Activated naive CD4-positive, alpha-beta T cell treated with anti-CD3 and anti-CD28 coated beads for 36 hours (primary cell): ENCODE measurements at regions of chr11 and their contacts with region 1.

Region 1: DNA sequence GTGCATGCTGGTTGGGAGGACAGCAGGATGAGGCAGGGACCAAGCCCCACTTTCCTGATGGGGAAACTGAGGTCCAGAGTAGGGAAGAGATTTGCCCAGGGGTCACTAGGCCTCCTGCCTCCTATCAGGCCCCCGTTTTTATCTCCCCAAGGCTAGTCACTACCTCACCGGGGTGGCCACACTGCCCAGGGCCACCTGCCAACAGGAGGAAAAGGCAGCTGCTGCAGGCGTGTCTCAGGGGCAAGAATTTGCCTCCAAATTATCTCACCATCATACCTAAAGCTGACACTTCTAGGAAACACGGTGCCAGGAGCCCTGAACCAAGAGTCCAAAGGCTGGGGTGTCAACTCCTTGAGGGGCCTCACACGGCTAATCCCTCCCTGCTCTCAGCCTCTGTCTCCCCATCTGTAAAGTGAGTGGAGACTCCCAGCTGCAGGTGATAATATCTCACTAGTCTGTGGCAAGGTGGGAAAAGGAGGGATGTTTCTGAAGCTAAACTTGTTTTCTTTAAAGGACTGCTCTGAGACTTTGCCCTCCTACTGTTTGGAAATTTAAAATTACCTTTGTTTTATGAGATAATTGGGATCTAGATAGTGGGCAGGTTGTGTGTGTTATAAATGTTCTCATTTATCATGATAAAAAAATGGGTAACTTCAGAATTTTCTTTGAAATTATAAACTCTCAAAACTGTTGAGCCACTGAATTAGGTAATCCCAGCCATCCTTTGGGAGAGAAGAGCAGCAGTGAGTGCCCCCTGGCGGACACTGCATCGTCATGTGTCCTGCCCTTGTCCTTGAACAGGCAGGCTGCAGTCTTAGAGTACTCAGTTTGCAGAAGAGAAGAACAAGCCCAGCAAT is 60.0 kb downstream of the MYO7A start:
- DNase-seq: peak; percentile 85
- H3K4me3 Mint-ChIP-seq: no peak overlapping the region
- H3K27ac Mint-ChIP-seq: no peak overlapping the region
- H3K4me1 Mint-ChIP-seq: no peaks in the 10 kb centered on the region
- H3K27me3 Mint-ChIP-seq: no peaks in the 10 kb centered on the region

Region 2: GRCh38 chr11:77127232-77127911 is 60.6 kb before region 1 on chr11:
- CTCF ChIA-PET with region 1: interaction called, 87 read pairs
- intact Hi-C with region 1: loop called (anchors 1 kb)
- DNase-seq: peak; percentile 64
- H3K4me3 Mint-ChIP-seq: peak overlapping the region; percentile 59
- H3K27ac Mint-ChIP-seq: no peak overlapping the region
- H3K4me1 Mint-ChIP-seq: peaks cover 6% of the 10 kb centered on the region
- H3K27me3 Mint-ChIP-seq: no peaks in the 10 kb centered on the region

Region 3: DNA sequence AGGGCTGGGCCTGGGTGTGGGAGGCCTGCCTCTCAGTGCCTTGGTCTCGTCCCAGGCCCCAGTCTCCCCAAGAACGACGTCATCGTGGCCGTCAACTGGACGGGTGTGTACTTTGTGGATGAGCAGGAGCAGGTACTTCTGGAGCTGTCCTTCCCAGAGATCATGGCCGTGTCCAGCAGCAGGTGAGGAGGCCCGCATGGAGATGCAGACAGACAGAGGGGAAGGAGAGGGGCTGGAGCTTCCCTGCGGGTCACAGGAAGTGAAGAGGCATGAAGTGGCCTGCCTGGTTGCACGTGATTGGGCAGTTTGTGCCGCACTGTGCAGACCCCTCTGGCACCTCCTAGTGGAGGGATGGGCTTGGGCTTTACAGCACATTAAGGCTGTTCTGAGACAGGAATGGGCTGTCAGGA is 10.4 kb after region 1 on chr11:
- CTCF ChIA-PET with region 1: interaction called, 11 read pairs
- intact Hi-C with region 1: no loop called
- DNase-seq: peak; percentile 38
- H3K4me3 Mint-ChIP-seq: no peak overlapping the region
- H3K27ac Mint-ChIP-seq: no peak overlapping the region
- H3K4me1 Mint-ChIP-seq: no peaks in the 10 kb centered on the region
- H3K27me3 Mint-ChIP-seq: no peaks in the 10 kb centered on the region

Region 4: GRCh38 chr11:77287615-77288273 is 99.7 kb after region 1 on chr11:
- CTCF ChIA-PET with region 1: no interaction called
- intact Hi-C with region 1: no loop called
- DNase-seq: no peak
- H3K4me3 Mint-ChIP-seq: no peak overlapping the region
- H3K27ac Mint-ChIP-seq: no peak overlapping the region
- H3K4me1 Mint-ChIP-seq: no peaks in the 10 kb centered on the region
- H3K27me3 Mint-ChIP-seq: peaks cover 21% of the 10 kb centered on the region

Region 5: DNA sequence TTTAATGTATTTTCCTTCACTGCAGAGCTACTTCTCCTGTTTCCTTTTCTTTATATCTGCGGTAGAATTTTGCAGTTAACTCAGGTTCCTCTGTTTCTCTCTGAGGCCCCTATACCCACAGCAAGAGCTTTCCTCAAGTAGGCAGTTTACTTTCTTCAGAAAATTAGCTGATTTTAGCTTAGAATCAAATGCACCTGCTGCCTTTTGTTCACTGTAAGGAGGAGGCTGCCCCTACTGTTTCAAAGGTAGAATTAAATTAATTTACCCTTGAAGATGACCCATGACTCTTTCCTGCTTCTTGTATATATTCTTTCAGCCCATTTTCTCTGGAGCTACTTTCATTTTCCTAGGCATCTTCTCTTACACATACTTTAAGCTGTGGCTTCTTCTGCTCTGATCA is 182.2 kb after region 1 on chr11:
- CTCF ChIA-PET with region 1: no interaction called
- intact Hi-C with region 1: loop called (anchors 10 kb)
- DNase-seq: no peak
- H3K4me3 Mint-ChIP-seq: no peak overlapping the region
- H3K27ac Mint-ChIP-seq: no peak overlapping the region
- H3K4me1 Mint-ChIP-seq: peaks cover 10% of the 10 kb centered on the region
- H3K27me3 Mint-ChIP-seq: no peaks in the 10 kb centered on the region

Region 6: GRCh38 chr11:77547863-77548551 is 360.0 kb after region 1 on chr11:
- CTCF ChIA-PET with region 1: interaction called, 5 read pairs
- intact Hi-C with region 1: loop called (anchors 1 kb)
- DNase-seq: peak; percentile 55
- H3K4me3 Mint-ChIP-seq: no peak overlapping the region
- H3K27ac Mint-ChIP-seq: no peak overlapping the region
- H3K4me1 Mint-ChIP-seq: peaks cover 2% of the 10 kb centered on the region
- H3K27me3 Mint-ChIP-seq: no peaks in the 10 kb centered on the region

Region 7: GRCh38 chr11:77619576-77620198 is 431.7 kb after region 1 on chr11:
- CTCF ChIA-PET with region 1: no interaction called
- intact Hi-C with region 1: loop called (anchors 1 kb)
- DNase-seq: no peak
- H3K4me3 Mint-ChIP-seq: no peak overlapping the region
- H3K27ac Mint-ChIP-seq: no peak overlapping the region
- H3K4me1 Mint-ChIP-seq: no peaks in the 10 kb centered on the region
- H3K27me3 Mint-ChIP-seq: no peaks in the 10 kb centered on the region